ENCODE measurements at regions of chr22 and their contacts with region 1.

Region 1: GRCh38 chr22:41800348-41801146 is at the start of gene CCDC134:
- DNase-seq: peak; percentile 89 to 93 (median 93)
- H3K4me3 ChIP-seq: peak within 1 kb of the TSS; percentile 91 to 92
- H3K4me3 Mint-ChIP-seq: peak within 1 kb of the TSS; percentile 91 to 98 (median 96)
- H3K27ac ChIP-seq: peak within 1 kb of the TSS; percentile 85
- H3K27ac Mint-ChIP-seq: peak within 1 kb of the TSS; percentile 90 to 99 (median 98)
- H3K4me1 ChIP-seq: peaks cover 37% of the 10 kb centered on the region
- H3K4me1 Mint-ChIP-seq: peaks cover 20 to 53% (median 34%) of the 10 kb centered on the region in 4 donors
- H3K27me3 ChIP-seq: no peaks in the 10 kb centered on the region
- H3K27me3 Mint-ChIP-seq: no peaks in the 10 kb centered on the region
- total RNA-seq, gene CCDC134: 23.2 to 27.8 TPM

Region 2: DNA sequence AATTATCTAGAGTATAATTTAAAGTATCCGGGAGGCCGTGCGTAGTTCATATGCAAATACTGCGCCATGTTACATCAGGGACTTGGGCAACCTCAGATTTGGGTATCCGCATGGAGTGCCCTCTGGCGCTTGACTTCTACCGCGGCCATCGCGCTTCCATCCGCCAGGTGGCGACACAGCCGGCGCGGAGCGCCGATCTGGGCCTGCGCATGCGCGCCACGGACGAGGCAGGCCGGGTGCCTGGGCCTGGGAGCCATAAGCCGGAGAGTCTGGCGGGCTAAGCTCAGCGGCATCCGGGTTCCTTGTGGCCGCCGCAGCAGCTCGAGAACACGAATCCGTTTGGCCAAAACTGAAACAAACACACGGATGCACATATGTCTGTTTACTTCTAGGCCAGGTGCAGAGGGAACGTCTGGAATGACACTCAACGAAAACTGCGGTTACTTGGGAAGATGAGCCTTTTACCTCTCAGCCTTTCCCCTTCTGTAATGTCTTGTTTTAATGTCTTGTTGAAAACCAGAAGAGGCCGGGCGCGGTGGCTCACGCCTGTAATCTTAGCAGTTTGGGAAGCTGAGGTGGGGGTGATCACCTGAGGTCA is 133.8 kb before region 1 on chr22:
- CTCF ChIA-PET with region 1: interaction called, 11 read pairs
- POLR2A ChIA-PET with region 1: interaction called, 6 read pairs
- intact Hi-C with region 1: no loop called
- DNase-seq: peak; percentile 91 to 97 (median 96)
- H3K4me3 ChIP-seq: peak overlapping the region in 1 of 2 donors; percentile 39
- H3K4me3 Mint-ChIP-seq: peak overlapping the region; percentile 86 to 94 (median 88)
- H3K27ac ChIP-seq: peak overlapping the region; percentile 80
- H3K27ac Mint-ChIP-seq: peak overlapping the region; percentile 97 to 99 (median 98)
- H3K4me1 ChIP-seq: peaks cover 14% of the 10 kb centered on the region
- H3K4me1 Mint-ChIP-seq: peaks cover 4 to 14% (median 11%) of the 10 kb centered on the region in 4 donors
- H3K27me3 ChIP-seq: no peaks in the 10 kb centered on the region
- H3K27me3 Mint-ChIP-seq: no peaks in the 10 kb centered on the region

Region 3: DNA sequence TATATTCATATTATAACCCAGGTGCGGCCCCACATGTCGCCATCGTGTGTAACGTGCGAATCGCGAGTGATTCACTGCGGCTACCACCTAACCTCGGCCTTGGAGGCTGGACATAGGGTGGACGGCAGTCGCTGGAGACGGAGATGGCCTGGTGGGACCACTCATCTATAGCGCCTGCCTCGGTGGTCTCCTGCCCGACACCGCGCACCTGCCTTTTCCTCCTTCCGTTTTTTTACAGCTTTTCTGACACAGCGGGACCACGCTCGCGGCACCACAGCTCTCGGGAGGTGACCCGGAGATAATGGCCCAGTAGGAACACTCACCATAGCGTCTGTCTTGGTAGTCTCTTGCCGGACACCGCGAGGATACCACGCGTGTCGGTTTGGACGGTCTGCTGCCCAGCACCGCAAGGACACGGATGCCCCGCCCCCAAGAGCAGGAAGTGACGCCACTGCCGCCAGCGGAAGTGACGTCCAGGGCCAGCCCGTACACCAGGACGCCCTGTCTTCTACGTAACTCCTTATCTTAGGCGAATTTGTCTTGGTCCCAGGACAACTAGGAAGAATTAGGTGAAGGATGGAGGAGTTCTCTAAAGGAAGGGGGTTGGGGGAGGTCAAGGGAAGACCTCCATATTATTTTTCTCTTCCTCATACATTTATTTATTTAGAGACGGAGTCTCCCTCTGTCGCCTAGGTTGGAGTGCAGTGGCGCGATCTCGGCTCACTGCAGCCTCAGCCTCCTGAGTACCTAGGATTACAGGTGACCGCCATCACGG is 118.3 kb before region 1 on chr22:
- CTCF ChIA-PET with region 1: no interaction called
- POLR2A ChIA-PET with region 1: no interaction called
- intact Hi-C with region 1: no loop called
- DNase-seq: peak; percentile 84 to 89 (median 85)
- H3K4me3 ChIP-seq: peak overlapping the region; percentile 23 to 57
- H3K4me3 Mint-ChIP-seq: peak overlapping the region; percentile 95 to 100 (median 98)
- H3K27ac ChIP-seq: peak overlapping the region; percentile 86
- H3K27ac Mint-ChIP-seq: peak overlapping the region; percentile 98 to 100 (median 99)
- H3K4me1 ChIP-seq: peaks cover 48% of the 10 kb centered on the region
- H3K4me1 Mint-ChIP-seq: peaks cover 15 to 54% (median 33%) of the 10 kb centered on the region in 4 donors
- H3K27me3 ChIP-seq: no peaks in the 10 kb centered on the region
- H3K27me3 Mint-ChIP-seq: no peaks in the 10 kb centered on the region

Region 4: DNA sequence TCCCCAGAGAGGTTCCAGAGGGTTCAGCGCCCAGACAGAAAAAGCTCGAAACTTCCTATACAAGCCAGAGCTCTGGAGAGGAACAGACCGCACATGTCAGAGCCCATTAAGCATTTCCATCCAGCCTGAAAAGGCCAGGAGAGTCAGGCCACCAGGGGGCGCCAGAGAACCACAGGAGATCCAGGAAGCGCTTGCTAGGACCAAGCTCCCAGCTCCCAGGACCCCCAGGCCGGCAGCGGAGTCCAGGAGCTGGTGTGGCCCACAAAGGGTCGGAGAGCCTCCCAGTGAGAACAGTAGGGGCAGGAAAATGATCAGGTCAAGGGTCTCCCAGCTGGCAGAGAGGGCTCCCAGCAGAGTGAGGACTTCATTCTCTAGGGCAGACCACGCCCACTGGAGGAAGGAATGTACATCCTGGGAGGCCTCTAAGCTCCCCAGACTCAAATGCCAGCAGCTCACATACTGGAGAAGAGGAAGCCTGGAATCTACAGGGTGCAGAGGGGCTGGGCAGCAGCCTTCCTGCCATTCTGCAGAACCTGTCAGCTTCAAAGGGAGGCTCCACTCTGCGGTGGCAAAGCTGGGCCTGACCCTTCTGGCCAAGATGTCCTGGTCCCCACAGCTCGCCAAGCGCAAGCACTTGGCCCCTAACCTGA is 103.3 kb before region 1 on chr22:
- CTCF ChIA-PET with region 1: interaction called, 26 read pairs
- POLR2A ChIA-PET with region 1: interaction called, 26 read pairs
- intact Hi-C with region 1: loop called (anchors 5 kb)
- DNase-seq: peak; percentile 81 to 87 (median 83)
- H3K4me3 ChIP-seq: no peak overlapping the region
- H3K4me3 Mint-ChIP-seq: peak overlapping the region; percentile 50 to 84 (median 74)
- H3K27ac ChIP-seq: peak overlapping the region; percentile 2
- H3K27ac Mint-ChIP-seq: peak overlapping the region in 6 of 7 donors; percentile 51 to 88 (median 80)
- H3K4me1 ChIP-seq: peaks cover 14% of the 10 kb centered on the region
- H3K4me1 Mint-ChIP-seq: peaks cover 9 to 21% (median 13%) of the 10 kb centered on the region in 4 donors
- H3K27me3 ChIP-seq: no peaks in the 10 kb centered on the region
- H3K27me3 Mint-ChIP-seq: no peaks in the 10 kb centered on the region

Region 5: DNA sequence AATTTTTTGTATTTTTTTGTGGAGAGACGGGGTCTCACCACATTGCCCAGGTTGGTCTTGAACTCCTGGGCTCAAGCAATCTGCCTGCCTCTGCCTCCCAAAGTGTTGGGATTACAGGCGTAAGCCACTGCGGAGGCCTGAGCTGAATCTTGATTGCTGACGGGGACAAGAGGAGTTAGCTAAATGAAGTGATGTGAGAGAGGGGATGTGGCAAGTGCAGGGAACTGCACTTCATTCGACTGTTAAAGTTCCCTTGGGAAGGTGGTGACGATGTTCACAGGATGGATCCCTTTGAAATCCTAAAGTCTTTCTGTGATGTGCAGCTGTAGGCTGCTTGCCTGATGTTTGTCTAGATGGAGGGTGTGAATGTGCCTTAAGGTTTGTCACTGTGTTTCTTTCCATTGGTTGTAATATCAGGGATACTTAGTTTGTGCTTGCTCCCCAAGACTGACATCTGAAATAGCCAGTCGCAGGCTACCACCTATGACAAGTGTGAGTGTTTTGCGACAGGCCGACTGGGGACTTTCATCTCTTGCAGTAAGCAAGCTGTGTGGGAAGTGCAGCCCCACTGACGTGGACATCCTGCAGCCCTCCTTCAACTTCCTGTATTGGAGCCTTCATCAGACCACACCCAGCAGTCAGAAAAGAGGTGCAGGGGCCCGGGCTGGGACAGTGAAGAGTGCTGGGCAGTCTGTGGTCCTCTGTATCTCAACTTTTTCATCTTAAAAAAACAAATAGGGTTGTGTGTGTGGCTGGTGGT is 19.6 kb before region 1 on chr22:
- CTCF ChIA-PET with region 1: interaction called, 71 read pairs
- POLR2A ChIA-PET with region 1: interaction called, 584 read pairs
- intact Hi-C with region 1: loop called (anchors 1 kb)
- DNase-seq: peak; percentile 90 to 99 (median 95)
- H3K4me3 ChIP-seq: peak overlapping the region; percentile 88 to 92
- H3K4me3 Mint-ChIP-seq: peak overlapping the region; percentile 88 to 94 (median 90)
- H3K27ac ChIP-seq: peak overlapping the region; percentile 90
- H3K27ac Mint-ChIP-seq: peak overlapping the region; percentile 92 to 100 (median 99)
- H3K4me1 ChIP-seq: peaks cover 50% of the 10 kb centered on the region
- H3K4me1 Mint-ChIP-seq: peaks cover 29 to 53% (median 40%) of the 10 kb centered on the region in 4 donors
- H3K27me3 ChIP-seq: no peaks in the 10 kb centered on the region
- H3K27me3 Mint-ChIP-seq: no peaks in the 10 kb centered on the region

Region 6: DNA sequence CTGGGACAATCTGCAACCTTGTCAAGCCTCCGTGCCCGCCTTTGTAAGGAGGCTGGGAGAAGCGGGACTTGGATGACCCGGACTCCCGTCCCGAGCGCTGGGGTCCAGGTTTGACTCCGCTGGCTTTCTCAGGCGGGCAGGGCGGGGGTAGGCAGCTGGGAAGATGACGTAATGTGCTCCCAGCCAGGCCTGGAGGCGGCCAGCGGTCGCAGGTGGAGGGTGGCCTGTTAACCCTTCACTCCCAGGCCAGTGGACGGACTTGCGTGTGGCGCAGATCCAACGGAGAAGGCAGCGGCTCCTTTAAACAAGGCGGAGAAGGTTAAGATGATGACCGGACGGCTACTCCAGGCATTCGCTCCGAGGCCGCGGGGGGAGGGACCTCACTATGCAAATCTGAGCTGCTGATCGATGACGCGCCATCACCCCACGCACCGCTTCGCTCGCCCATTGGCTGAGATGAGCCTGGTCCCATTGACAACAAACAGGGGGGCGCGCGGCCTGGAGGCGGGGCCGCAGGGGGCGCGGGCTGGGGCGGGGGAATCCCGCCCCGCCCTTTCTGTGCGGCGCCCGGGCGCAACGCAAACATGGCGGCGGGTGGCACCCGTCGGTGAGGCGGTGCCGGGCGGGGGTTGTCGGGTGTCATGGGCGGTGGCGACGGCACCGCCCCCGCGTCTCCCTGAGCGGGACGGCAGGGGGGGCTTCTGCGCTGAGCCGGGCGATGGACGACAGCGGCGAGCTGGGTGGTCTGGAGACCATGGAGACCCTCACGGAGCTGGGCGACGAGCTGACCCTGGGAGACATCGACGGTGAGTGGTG is 32.2 kb after region 1 on chr22 and contains the start of gene SREBF2:
- CTCF ChIA-PET with region 1: interaction called, 5 read pairs
- POLR2A ChIA-PET with region 1: interaction called, 98 read pairs
- intact Hi-C with region 1: loop called (anchors 1 kb)
- DNase-seq: peak; percentile 97 to 99 (median 98)
- H3K4me3 ChIP-seq: peak within 1 kb of the TSS; percentile 36 to 93
- H3K4me3 Mint-ChIP-seq: peak within 1 kb of the TSS; percentile 92 to 97 (median 95)
- H3K27ac ChIP-seq: peak within 1 kb of the TSS; percentile 84
- H3K27ac Mint-ChIP-seq: peak within 1 kb of the TSS; percentile 98 to 100 (median 99)
- H3K4me1 ChIP-seq: peaks cover 26% of the 10 kb centered on the region
- H3K4me1 Mint-ChIP-seq: peaks cover 21 to 46% (median 31%) of the 10 kb centered on the region in 4 donors
- H3K27me3 ChIP-seq: no peaks in the 10 kb centered on the region
- H3K27me3 Mint-ChIP-seq: no peaks in the 10 kb centered on the region
- total RNA-seq, gene SREBF2: 109 to 112 TPM

Region 7: GRCh38 chr22:41857155-41857859 is 56.8 kb after region 1 on chr22:
- CTCF ChIA-PET with region 1: interaction called, 13 read pairs
- POLR2A ChIA-PET with region 1: interaction called, 21 read pairs
- intact Hi-C with region 1: loop called (anchors 2 kb)
- DNase-seq: peak; percentile 71 to 89 (median 72)
- H3K4me3 ChIP-seq: no peak overlapping the region
- H3K4me3 Mint-ChIP-seq: peak overlapping the region in 7 of 8 donors; percentile 0 to 64 (median 47)
- H3K27ac ChIP-seq: peak overlapping the region; percentile 40
- H3K27ac Mint-ChIP-seq: peak overlapping the region; percentile 71 to 96 (median 86)
- H3K4me1 ChIP-seq: peaks cover 53% of the 10 kb centered on the region
- H3K4me1 Mint-ChIP-seq: peaks cover 29 to 59% (median 44%) of the 10 kb centered on the region in 4 donors
- H3K27me3 ChIP-seq: no peaks in the 10 kb centered on the region
- H3K27me3 Mint-ChIP-seq: no peaks in the 10 kb centered on the region

Region 8: DNA sequence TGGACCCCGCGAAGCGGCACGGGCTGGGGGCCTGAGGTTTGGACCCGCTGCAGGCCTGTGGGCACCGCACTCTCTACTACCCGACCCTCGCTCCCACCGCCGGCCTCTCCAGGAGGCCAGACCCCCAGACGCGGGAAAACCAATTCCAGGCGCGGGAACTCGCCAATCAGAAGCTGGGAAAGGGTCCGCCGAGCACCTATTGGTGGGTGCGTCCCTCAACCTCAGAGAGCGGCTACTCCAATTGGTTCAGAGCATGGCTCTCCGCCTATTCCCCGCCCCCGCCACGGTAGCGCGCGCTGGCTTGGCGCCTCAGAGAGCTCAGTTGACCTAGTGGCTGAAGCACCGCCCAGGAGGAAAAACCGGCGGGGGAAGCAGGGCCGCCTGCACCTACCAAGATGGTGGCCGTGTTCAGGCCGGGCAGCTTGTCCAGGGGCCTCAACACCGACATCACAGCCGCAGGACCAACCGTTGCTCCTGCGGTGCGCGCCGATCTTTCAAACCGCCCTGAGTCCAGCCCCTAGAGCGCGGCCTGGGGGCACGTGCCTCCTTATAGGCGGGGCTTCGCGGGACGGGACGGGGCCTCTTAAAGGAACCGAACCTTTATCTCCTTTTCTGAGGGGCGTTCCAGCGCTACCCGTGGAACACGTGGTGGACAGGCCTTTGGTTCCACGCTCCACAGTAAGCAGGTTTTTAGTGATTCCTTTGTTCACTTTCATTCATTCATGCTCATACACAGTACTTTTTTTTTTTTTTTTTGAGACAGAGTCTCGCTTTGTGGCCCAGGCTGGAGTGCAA is 146.3 kb after region 1 on chr22 and contains the start of gene CENPM:
- CTCF ChIA-PET with region 1: interaction called, 5 read pairs
- POLR2A ChIA-PET with region 1: interaction called, 16 read pairs
- intact Hi-C with region 1: no loop called
- DNase-seq: peak; percentile 84 to 88 (median 86)
- H3K4me3 ChIP-seq: peak within 1 kb of the TSS; percentile 84 to 87
- H3K4me3 Mint-ChIP-seq: peak within 1 kb of the TSS; percentile 89 to 97 (median 92)
- H3K27ac ChIP-seq: peak within 1 kb of the TSS; percentile 53
- H3K27ac Mint-ChIP-seq: peak within 1 kb of the TSS; percentile 82 to 94 (median 89)
- H3K4me1 ChIP-seq: peaks cover 14% of the 10 kb centered on the region
- H3K4me1 Mint-ChIP-seq: peaks cover 4 to 29% (median 12%) of the 10 kb centered on the region in 4 donors
- H3K27me3 ChIP-seq: no peaks in the 10 kb centered on the region
- H3K27me3 Mint-ChIP-seq: no peaks in the 10 kb centered on the region
- total RNA-seq, gene CENPM: 7.6 to 12.0 TPM